ENCODE measurements at regions of chr2 and their contacts with region 1.

Region 1: DNA sequence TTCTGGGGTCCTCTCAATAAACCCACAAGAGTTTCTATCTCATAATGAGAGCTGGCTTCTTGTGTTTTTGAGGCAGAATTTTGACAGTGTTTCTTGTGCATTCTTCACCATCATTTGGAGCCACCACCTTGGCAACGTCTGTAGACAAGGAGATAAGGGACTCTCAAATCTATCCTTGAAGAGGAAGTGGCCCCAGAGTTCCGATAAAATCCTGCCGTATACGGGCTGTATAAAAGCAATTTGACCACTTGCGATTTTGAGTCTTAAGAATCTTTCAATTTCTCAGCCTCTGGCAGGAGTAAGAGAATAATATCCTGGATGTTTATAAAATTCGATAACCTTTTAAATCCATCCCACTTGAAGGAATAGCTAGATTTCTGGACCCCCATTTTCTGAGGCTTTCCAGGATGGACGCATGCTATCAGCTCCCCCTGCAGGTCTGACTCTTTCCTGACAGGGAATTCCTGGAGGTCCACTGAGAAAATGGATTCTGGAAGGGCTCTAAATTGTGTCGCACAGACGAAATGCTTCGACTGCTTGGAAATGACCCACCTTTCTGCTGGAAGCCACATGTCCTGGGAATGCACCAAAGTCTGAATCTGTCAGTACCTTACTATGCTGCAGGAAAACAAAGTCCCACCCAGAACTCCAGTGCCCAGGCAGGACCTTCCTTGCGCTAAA is 54.1 kb downstream of the E2F6 start:
- DNase-seq: peak in 2 of 3 donors; percentile 56 to 85
- ATAC-seq: peak; percentile 73
- H3K4me3 ChIP-seq: no peak overlapping the region
- H3K4me1 ChIP-seq: peaks cover 10% of the 10 kb centered on the region
- CTCF ChIP-seq: peak; percentile 56

Region 2: DNA sequence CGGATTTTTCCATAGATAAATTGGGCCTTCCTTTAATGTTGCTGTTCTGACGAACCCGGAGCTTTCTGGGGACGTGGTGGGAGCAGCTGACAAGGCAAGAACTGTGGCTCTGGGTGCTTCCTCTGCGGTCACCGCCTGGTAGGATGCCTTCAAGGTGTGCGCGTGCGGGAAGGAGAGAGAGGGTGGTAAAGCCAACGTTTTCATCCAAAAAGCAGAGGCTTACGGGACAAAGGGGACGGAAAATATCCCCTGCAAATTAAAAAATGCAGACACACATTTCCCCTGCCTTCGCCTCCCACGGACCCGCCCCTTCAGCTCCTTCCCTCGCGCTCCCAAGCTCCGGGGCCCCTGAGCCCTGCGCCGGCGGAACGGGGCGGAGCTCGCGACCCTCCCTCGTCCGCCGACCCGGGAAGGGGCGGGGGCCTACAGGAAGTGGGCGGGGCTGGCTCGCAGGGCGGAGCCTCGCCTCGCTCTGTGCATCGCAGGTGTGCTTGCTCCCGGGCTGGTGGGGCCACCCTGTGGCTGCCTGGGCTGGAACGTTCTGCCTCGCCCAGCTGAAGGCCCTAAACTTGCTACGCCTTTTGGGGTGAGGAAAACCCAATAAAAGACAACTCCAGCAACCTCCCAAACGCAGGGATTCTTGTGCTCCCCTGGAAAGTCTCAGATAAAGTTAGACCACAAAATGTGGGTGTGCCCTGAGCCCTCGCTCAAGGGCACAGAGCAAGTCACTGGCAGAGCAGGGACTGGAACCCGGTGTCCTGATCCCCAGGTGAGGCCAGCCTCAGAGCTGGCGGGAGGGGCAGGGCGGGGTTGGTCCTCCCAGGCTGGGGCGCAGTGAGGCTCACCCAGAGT is 282.1 kb before region 1 on chr2:
- intact Hi-C with region 1: loop called in 1 of 2 experiments (anchors 10 kb)
- DNase-seq: peak; percentile 86 to 92 (median 91)
- ATAC-seq: peak; percentile 81
- H3K4me3 ChIP-seq: no peak overlapping the region
- H3K4me1 ChIP-seq: peaks cover 17% of the 10 kb centered on the region
- CTCF ChIP-seq: no peak

Region 3: GRCh38 chr2:11234309-11234708 is 177.6 kb before region 1 on chr2:
- intact Hi-C with region 1: loop called in 1 of 2 experiments (anchors 10 kb)
- DNase-seq: no peak
- ATAC-seq: no peak
- H3K4me3 ChIP-seq: no peak overlapping the region
- H3K4me1 ChIP-seq: no peaks in the 10 kb centered on the region
- CTCF ChIP-seq: no peak

Region 4: DNA sequence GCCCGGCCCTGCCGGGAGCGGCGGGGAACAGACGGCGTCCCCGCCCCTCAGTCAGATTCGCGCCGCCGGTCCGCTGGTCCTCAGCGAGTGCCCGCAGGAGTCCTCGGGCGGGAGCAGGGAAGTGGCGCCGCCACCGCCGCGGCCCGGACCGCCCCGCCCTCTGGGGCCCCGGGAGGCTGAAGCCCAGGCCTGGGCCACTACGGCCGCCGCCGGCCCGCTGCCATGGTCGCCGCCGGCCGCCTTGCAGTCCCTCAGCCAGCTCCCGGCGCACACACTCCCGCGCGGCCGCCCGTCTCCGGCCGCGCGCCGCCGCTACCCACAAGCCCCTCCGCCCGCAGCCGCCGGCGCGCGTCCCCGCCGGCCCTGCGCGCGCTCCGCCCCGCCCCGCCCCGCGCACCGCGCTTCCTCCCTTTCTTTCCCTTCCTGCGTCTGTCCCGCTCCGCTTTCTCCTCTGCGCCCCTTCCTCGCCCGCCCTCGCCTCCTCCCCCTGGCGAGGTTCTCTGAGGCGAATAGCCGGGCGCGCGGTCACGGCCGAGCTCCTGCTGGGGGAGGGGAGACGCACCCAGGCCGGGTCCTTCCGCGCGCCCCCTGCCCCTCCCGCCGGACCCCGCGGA is 67.5 kb before region 1 on chr2 and contains the start of gene ROCK2:
- intact Hi-C with region 1: loop called in 1 of 2 experiments (anchors 10 kb)
- DNase-seq: peak; percentile 89 to 93 (median 91)
- ATAC-seq: peak; percentile 79
- H3K4me3 ChIP-seq: peak within 1 kb of the TSS; percentile 99
- H3K4me1 ChIP-seq: peaks cover 10% of the 10 kb centered on the region
- CTCF ChIP-seq: no peak
- total RNA-seq, gene ROCK2: 67.7 to 77.8 (median 71.0) TPM

Region 5: DNA sequence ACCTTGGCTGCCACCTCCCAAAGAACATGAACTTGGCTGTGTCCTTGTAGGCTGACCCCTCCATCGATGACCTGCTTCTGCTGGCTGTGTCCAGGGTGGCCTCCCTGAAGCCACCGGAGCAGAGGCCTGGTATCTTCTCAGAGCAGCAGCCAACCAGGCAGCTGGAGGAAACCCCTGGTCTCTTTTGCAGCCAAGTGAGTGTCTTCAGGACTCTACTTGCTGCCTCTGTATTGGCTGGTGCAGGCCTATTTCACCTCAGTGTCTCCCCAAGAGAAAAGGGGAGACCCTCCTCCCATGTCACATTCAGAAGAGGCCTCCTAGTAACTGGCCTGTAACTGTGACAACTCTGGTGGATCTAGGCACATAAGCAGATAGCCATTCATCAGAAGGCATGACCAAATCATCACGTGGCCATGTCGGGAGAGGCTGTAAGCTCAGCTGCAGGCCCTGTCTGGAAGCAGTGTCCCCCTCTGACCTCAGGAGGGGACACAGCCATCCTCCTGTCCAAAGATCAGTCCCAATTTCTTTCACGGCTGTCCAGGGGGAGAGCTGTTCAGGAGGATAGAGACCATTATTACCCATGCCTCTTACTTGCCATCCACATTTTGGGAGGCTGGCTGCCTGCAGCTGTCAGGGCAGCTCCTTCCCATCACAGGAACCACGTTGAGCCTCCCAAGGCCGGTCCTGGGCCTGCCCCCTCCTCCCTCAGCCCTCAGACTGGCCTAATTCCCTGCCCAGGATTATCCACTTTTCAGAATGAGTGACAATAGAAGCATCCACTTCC is 46.6 kb before region 1 on chr2:
- intact Hi-C with region 1: no loop called
- DNase-seq: no peak
- ATAC-seq: no peak
- H3K4me3 ChIP-seq: no peak overlapping the region
- H3K4me1 ChIP-seq: peaks cover 10% of the 10 kb centered on the region
- CTCF ChIP-seq: no peak

Region 6: DNA sequence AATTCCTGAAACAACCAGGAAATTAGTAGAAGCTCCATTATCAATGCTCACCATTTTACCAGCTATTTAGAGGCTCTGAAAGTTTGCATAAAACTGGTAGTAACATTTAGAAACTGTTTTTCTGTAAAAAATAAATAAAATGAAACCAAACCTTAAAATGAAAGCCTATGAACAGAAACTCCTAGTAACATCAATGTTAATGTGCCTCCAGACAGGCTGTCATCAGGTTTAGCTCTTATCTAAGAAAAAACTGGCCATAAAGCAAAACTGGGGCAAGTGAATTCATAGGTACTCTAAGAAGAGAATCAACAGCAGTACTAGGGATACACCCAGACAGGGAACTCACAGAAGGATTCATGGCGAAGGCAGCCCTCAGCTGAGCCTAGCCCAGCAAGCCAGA is 46.0 kb after region 1 on chr2:
- intact Hi-C with region 1: no loop called
- DNase-seq: no peak
- ATAC-seq: no peak
- H3K4me3 ChIP-seq: no peak overlapping the region
- H3K4me1 ChIP-seq: no peaks in the 10 kb centered on the region
- CTCF ChIP-seq: no peak

Region 7: DNA sequence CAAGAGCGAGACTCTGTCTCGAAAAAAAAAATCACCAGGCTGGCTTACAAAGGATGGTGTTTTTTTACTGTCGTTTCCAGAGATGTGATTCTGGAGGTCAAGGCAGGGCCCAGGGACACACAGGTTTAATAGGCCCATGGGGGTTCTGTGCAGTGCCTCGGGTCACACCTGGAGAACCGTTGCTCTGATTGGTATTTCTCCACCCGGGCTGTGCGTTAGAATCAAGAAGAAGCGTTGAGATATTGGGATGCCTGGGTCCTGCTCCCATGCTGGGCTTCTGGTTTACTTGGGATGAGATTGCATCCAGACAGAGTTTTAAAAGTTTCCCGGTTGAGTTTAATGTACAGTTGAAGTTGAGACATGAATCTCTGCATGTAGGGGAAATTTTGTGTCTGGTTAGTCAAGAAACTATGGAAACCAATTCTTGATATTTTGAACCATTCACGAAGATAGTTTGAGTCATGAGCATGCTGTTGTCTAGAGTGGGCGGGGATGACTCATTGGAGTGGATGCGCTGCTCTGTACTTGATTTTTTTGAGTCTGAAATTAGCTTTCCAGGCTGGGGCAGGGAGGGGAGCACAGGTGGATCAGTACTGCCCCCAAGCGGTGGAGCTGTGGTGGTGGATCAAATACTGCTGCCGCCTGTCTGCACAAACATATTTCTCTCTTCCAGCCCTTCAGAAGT is 172.1 kb after region 1 on chr2:
- intact Hi-C with region 1: no loop called
- DNase-seq: peak in 2 of 3 donors; percentile 67 to 72
- ATAC-seq: peak; percentile 80
- H3K4me3 ChIP-seq: no peak overlapping the region
- H3K4me1 ChIP-seq: peaks cover 3% of the 10 kb centered on the region
- CTCF ChIP-seq: peak; percentile 42

Region 8: DNA sequence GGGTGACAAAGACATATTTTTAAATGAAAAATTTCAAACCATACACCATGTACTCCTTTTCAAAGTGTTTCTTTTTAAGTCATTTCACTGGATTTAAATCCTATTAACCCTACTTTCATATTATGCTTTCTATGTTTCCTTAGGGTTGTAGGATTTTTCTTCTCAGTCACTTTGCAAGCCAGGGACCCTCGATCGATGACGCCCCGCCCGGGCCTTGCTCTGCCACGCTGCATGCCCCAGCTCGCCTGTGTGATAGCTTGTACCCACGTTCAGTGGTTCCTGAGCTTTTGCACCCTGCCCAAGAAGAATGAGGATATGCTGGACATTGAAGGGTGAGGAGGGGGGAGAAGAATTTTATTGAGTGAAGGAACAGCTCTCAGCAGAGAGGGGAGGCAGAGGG is 1872.8 kb after region 1 on chr2:
- intact Hi-C with region 1: no loop called
- DNase-seq: no peak
- ATAC-seq: no peak
- H3K4me3 ChIP-seq: no peak overlapping the region
- H3K4me1 ChIP-seq: no peaks in the 10 kb centered on the region
- CTCF ChIP-seq: no peak